SK-N-SH (cell line): ENCODE measurements at regions of chr3 and their contacts with region 1.

Region 1: DNA sequence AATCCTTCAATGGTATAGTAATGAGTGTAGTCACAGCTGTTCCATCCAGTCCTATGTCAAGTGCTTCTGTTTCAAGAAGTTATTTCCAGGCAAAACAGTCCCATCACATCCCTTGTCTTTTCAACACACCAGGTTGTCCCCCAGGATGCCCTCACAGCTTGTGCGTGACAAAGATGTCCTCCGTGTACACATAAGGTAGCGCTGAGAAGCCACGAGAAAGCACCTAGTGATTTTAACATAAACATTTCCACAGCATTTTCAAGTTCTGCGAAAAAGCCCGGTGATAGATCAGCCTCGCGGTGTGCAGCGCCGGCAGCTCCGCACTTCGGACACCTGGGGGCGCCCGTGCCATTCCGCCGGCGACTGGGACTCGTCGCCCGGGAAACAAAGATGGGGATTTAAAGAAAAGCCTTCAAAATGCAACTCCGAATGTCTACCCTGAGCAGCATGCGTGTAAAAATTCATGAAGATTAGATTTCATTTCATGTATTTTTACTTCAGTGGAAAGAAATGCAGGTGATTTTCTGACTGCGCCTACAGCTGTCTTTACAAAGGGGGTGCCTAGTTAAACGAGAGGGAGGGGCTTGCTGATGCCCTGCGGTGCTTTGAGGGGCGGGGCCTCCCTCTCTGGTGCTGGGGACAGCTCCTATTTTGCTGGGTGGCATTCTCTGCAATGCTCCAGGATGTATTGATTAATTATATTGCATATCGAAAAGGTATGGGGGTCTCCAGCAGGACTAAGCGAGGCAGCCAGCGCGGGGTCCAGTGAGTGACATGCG is 49.9 kb downstream of the KY start:
- DNase-seq: peak; percentile 83
- H3K4me3 ChIP-seq: peak overlapping the region; percentile 31 to 58
- H3K27ac ChIP-seq: peak overlapping the region in 1 of 2 experiments; percentile 85; a peak in 1 of 4 replicates
- H3K4me1 ChIP-seq: peaks cover 0 to 21% of the 10 kb centered on the region in 2 experiments; a peak in 3 of 4 replicates
- H3K27me3 ChIP-seq: no peaks in the 10 kb centered on the region
- CTCF ChIP-seq: peak; percentile 99
- EP300 ChIP-seq: no peak
- RAD21 ChIP-seq: peak; percentile 97

Region 2: GRCh38 chr3:133973249-133973980 is 627.5 kb before region 1 on chr3:
- CTCF ChIA-PET with region 1: no interaction called
- POLR2A ChIA-PET with region 1: no interaction called
- DNase-seq: no peak
- H3K4me3 ChIP-seq: no peak overlapping the region
- H3K27ac ChIP-seq: no peak overlapping the region
- H3K4me1 ChIP-seq: peaks cover 0 to 9% of the 10 kb centered on the region in 2 experiments; a peak in 1 of 4 replicates
- H3K27me3 ChIP-seq: no peaks in the 10 kb centered on the region
- CTCF ChIP-seq: no peak
- EP300 ChIP-seq: no peak
- RAD21 ChIP-seq: no peak

Region 3: DNA sequence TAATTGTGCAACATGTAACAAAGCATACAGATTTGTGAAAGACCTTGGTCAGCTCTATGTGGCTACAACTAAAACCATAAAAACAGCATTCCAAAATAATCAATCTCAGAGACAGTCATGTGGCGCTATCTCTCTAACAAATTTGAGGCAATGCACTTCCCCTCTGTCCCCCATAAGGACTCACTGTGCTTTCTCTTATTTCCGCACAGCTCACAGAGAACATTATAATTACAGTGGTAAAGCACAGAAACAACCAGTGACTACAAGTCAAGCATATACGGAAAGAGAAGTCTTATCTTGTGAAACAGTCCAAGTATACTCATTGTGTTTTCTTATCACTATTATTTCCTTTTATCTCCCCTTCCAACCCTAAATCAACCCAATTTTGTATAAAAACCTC is 414.5 kb before region 1 on chr3:
- CTCF ChIA-PET with region 1: no interaction called
- POLR2A ChIA-PET with region 1: no interaction called
- DNase-seq: no peak
- H3K4me3 ChIP-seq: no peak overlapping the region
- H3K27ac ChIP-seq: no peak overlapping the region
- H3K4me1 ChIP-seq: no peaks in the 10 kb centered on the region
- H3K27me3 ChIP-seq: no peaks in the 10 kb centered on the region
- CTCF ChIP-seq: no peak
- EP300 ChIP-seq: no peak
- RAD21 ChIP-seq: no peak

Region 4: GRCh38 chr3:134590766-134591165 is 10.1 kb before region 1 on chr3:
- CTCF ChIA-PET with region 1: interaction called, 30 read pairs
- POLR2A ChIA-PET with region 1: no interaction called
- DNase-seq: no peak
- H3K4me3 ChIP-seq: no peak overlapping the region
- H3K27ac ChIP-seq: no peak overlapping the region
- H3K4me1 ChIP-seq: peaks cover 0 to 2% of the 10 kb centered on the region in 2 experiments; a peak in 1 of 4 replicates
- H3K27me3 ChIP-seq: no peaks in the 10 kb centered on the region
- CTCF ChIP-seq: no peak
- EP300 ChIP-seq: no peak
- RAD21 ChIP-seq: no peak

Region 5: GRCh38 chr3:134625885-134626741 is 25.2 kb after region 1 on chr3:
- CTCF ChIA-PET with region 1: interaction called, 55 read pairs
- POLR2A ChIA-PET with region 1: no interaction called
- DNase-seq: no peak
- H3K4me3 ChIP-seq: no peak overlapping the region
- H3K27ac ChIP-seq: no peak overlapping the region
- H3K4me1 ChIP-seq: no peaks in the 10 kb centered on the region
- H3K27me3 ChIP-seq: no peaks in the 10 kb centered on the region
- CTCF ChIP-seq: no peak
- EP300 ChIP-seq: no peak
- RAD21 ChIP-seq: no peak

Region 6: GRCh38 chr3:134650431-134651346 is 49.8 kb after region 1 on chr3 and contains the start of gene KY:
- CTCF ChIA-PET with region 1: interaction called, 76 read pairs
- POLR2A ChIA-PET with region 1: no interaction called
- DNase-seq: peak; percentile 83
- H3K4me3 ChIP-seq: peak within 1 kb of the TSS; percentile 55 to 58
- H3K27ac ChIP-seq: peak within 1 kb of the TSS in 1 of 2 experiments; percentile 40; a peak in 2 of 4 replicates
- H3K4me1 ChIP-seq: peaks cover 5 to 12% of the 10 kb centered on the region in 2 experiments; a peak in 1 of 4 replicates
- H3K27me3 ChIP-seq: no peaks in the 10 kb centered on the region
- CTCF ChIP-seq: peak; percentile 47
- EP300 ChIP-seq: no peak
- RAD21 ChIP-seq: peak; percentile 44
- polyA plus RNA-seq, gene KY: 1.9 and 2.4 TPM in 2 replicates

Region 7: DNA sequence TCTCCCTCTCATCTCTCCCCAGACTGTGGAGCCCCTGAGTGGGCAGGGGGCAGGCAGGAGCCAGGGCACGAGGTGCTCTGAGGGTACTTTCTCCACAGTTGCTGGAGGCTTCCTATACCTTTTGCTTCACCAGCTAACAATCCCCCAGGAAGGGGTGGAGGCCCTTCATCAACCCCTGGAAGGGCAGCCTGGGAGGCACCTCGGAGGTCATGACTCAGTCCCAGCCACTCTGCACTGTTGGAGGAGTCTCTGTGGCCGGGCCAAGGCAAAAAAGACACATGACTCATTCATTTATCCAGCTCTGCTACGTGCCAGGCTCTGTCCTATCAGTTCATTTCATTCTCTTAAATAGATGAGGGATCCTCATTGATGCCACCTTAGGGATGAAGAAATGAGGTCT is 65.6 kb after region 1 on chr3:
- CTCF ChIA-PET with region 1: interaction called, 11 read pairs
- POLR2A ChIA-PET with region 1: no interaction called
- DNase-seq: no peak
- H3K4me3 ChIP-seq: no peak overlapping the region; a peak in 1 of 4 replicates
- H3K27ac ChIP-seq: peak overlapping the region in 1 of 2 experiments; percentile 63; a peak in 2 of 4 replicates
- H3K4me1 ChIP-seq: peaks cover 3 to 28% of the 10 kb centered on the region in 2 experiments; a peak in 3 of 4 replicates
- H3K27me3 ChIP-seq: no peaks in the 10 kb centered on the region
- CTCF ChIP-seq: no peak
- EP300 ChIP-seq: peak in 1 of 2 experiments; percentile 66; a peak in 1 of 4 replicates
- RAD21 ChIP-seq: no peak

Region 8: DNA sequence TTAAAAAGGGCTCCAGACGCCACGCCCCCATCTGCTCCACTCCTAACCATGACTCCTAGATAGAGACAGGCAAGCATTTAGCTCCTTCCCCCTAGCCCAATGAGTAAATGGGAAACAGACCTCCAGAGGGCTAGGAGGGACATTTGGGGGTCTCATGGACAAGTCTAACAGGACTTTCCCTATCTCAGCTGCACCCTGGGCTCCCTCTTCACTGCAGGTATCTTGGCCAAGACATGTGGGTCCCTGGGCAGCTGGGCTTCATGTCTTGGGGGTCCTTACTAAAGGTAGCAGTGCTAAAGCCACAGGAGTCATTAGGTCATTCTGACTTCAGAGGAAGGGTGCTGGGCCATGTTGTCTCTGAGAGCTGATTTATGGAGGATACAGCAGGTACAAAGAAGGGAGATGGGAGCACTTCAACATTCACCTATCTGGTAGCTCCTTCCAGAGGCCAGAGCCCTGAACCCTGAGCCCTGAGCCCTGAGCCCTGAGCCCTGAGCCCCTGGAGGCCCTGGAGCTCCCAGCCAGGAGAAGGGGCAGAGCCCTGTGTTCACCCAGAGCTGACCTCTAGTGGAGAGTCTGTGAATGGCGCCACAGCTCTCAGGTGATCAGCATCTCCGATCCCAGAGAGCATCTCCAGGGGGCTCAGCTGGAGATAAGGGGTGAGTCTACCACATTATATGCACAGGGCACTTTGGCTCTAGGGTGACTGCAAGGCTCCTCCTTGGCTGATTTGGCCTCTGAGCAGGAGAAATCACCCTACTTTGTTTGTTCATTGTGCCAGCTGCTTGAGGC is 154.1 kb after region 1 on chr3:
- CTCF ChIA-PET with region 1: interaction called, 38 read pairs
- POLR2A ChIA-PET with region 1: no interaction called
- DNase-seq: peak; percentile 48
- H3K4me3 ChIP-seq: no peak overlapping the region
- H3K27ac ChIP-seq: no peak overlapping the region
- H3K4me1 ChIP-seq: peaks cover 0 to 15% of the 10 kb centered on the region in 2 experiments; a peak in 2 of 4 replicates
- H3K27me3 ChIP-seq: no peaks in the 10 kb centered on the region
- CTCF ChIP-seq: peak; percentile 72
- EP300 ChIP-seq: no peak
- RAD21 ChIP-seq: peak; percentile 56

Region 9: DNA sequence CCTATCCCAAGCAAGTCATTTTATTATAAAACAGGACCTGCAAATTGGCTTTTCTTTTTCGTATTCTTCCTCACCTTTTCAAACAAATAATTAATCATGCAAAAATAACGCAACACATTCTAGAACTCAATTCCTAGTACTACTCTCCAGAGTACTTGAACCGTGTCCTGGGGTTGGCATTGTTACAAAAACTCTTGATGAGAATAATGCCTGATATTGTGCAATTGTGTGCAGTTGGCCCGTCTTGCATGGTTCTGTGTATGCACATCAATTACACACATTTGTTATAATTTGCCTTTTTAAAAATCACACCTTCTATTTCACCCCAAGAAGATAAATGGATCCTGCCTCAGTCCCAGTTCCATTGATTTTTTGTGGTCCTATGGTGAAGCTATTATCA is 399.6 kb after region 1 on chr3:
- CTCF ChIA-PET with region 1: no interaction called
- POLR2A ChIA-PET with region 1: no interaction called
- DNase-seq: no peak
- H3K4me3 ChIP-seq: no peak overlapping the region
- H3K27ac ChIP-seq: no peak overlapping the region
- H3K4me1 ChIP-seq: no peaks in the 10 kb centered on the region
- H3K27me3 ChIP-seq: no peaks in the 10 kb centered on the region
- CTCF ChIP-seq: no peak
- EP300 ChIP-seq: no peak
- RAD21 ChIP-seq: no peak

Region 10: DNA sequence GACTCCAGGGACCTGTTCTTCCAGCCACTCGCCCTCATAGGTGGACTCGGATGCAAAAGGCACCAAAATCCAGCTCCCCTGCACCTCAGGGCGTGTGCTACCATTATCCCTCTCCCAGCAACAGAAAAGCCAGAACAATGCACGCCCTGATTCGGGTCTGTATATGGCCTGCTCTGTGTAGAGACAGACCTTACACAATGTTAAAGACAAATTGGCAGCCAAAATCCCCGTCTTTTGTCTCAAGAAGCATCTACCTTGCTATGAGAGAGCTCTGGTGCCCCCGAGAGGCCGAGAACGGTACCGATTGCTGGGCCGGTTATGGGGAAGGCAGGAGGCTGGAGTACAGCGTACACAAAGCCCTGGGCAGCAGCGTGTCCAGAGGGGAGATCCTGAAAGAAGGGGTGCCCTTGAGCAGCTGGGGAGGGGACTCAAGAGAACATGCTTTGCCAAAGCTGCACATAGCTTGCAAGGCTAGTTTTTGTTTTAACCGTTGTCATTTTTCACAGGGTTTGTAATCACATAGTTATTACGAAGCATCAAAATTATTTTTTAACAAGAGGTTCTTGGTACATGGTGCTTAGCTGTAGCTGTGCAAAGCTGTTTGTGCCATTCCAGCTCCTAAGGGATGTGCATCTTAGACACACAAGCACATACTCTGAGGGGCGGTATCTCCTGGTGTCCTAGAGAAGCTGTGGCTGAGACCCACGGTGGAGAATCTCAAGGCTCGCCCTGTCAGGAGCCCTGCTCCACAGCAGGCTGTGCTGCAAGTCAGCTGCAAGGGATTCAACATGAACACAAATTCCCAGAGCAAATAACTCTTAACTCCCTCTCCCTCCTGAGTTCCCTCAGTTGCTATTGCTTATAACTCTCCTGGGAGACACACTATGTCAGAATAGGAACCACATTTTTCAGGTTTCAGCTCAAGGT is 903.1 kb after region 1 on chr3:
- CTCF ChIA-PET with region 1: interaction called, 47 read pairs
- POLR2A ChIA-PET with region 1: no interaction called
- DNase-seq: peak; percentile 68
- H3K4me3 ChIP-seq: no peak overlapping the region; a peak in 1 of 4 replicates
- H3K27ac ChIP-seq: no peak overlapping the region
- H3K4me1 ChIP-seq: no peaks in the 10 kb centered on the region
- H3K27me3 ChIP-seq: no peaks in the 10 kb centered on the region
- CTCF ChIP-seq: peak; percentile 72
- EP300 ChIP-seq: no peak
- RAD21 ChIP-seq: peak; percentile 83